ENCODE measurements at regions of chr5 and their contacts with region 1.

Region 1: GRCh38 chr5:90709323-90710155 is 150.9 kb downstream of the ADGRV1 start:
- DNase-seq: peak; percentile 29
- H3K4me3 ChIP-seq: no peak overlapping the region
- H3K27ac ChIP-seq: no peak overlapping the region
- H3K4me1 ChIP-seq: no peaks in the 10 kb centered on the region
- H3K27me3 ChIP-seq: no peaks in the 10 kb centered on the region
- CTCF ChIP-seq: peak; percentile 49

Region 2: DNA sequence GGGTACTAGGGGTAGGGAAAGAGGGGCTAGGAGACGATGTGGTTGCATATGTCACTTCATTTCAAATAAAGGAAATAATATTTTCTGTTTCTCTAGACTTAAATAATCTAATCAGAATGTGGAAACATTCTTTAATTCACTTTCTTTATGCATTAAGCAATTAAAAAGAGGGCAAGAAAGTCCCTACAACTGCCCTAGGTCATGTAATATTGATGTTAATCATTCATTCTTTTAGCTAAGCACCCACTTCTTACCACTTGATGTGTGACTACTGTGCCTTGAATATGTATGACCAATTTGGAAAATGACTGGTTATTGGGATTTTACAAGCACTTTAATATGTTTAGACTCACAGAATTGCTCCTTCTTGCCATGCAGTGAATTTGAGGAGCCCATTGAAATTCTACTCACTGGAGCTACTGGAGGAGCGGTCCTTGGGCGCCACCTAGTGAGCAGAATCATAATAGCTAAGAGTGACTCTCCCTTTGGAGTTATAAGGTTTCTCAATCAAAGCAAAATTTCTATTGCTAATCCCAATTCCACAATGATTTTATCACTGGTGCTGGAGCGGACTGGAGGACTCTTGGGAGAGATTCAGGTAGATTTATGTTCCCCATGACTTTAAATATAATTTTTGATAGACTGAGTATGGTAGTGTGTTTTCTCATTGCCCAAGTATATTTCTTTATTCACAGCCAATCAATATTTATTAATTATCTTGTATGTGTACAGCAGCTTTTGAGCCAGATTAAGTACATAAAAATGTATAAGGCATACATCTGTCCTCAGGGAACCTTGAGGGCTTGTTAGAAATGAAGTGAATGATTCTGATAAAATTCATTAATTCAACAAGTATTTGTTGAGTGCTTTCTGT is 74.2 kb after region 1 on chr5:
- intact Hi-C with region 1: loop called (anchors 5 kb)
- DNase-seq: peak; percentile 75
- H3K4me3 ChIP-seq: no peak overlapping the region
- H3K27ac ChIP-seq: no peak overlapping the region
- H3K4me1 ChIP-seq: no peaks in the 10 kb centered on the region
- H3K27me3 ChIP-seq: no peaks in the 10 kb centered on the region
- CTCF ChIP-seq: peak; percentile 87

Region 3: DNA sequence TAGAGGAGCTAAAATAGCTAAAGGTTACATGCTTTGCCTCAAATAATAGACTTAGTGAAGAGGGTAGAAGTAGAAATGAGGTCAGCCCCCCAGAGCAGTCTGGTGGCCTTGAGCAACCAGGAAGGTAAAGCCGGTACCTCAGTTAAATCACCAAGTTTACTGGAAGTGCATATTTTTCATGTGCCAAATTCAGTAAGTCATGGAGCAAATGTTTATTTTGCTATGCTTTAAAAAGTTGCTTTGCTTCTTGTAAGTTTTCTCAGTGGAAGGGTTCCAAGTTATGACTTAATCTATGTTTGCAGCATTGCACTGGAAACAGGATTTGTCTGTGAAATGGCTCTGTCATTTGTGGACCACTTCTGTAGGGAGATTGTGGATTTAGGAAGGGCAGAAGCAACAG is 416.9 kb after region 1 on chr5:
- intact Hi-C with region 1: no loop called
- DNase-seq: no peak
- H3K4me3 ChIP-seq: no peak overlapping the region
- H3K27ac ChIP-seq: peak overlapping the region; percentile 66
- H3K4me1 ChIP-seq: peaks cover 12% of the 10 kb centered on the region
- H3K27me3 ChIP-seq: no peaks in the 10 kb centered on the region
- CTCF ChIP-seq: no peak